GM12878 (cell line): ENCODE measurements at regions of chr22 and their contacts with region 1.

Region 1: DNA sequence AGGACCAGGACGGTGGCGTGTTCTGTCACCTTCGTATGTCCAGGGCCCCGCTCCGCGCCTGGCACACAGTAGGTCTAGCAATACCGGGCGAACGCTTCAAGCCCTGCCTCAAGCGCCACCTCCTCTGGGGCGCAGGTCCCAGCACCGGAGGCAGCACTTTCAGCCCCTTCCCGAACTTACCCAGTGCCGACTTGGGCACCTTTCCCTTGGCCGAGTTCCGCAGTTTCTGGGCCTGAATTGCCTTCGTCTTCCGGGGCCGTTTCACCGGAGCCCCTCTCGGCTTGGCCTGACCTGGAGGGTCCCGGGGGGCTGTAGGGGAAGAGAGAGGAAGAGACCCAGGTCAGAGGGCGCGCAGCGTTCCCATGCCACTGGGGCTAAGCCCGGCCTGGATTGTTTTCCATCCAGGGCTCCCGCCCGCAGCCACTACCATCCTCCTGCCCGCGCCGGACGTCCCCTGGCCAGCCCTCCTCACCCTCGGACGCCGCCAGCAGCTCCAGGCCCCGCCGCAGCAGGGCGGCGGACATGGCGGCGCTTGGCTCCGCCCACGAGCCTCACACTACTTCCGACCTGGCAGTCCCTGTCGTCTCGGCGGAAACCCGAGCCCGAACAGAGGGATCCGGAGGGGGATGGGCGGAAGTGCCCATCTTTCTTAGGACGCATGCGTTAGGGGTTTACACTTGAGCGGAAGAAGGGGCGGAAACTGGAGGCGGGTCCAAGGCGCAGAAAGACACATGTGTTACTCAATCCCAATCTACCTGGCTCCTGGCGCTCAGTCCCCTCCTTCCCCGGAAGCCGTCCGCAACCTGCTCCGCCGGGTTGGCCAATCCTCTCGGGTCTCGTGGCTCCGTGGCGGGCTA is at the start of gene RPS19BP1:
- DNase-seq: peak; percentile 100
- ATAC-seq: peak; percentile 80
- H3K4me3 ChIP-seq: peak within 1 kb of the TSS; percentile 99
- H3K27ac ChIP-seq: peak within 1 kb of the TSS; percentile 96
- H3K4me1 ChIP-seq: peaks cover 34% of the 10 kb centered on the region
- H3K27me3 ChIP-seq: no peaks in the 10 kb centered on the region
- CTCF ChIP-seq: no peak
- EP300 ChIP-seq: no peak
- POLR2A ChIP-seq: peak; percentile 99
- RAD21 ChIP-seq: no peak
- polyA plus RNA-seq, gene RPS19BP1: 2.7 to 14.3 TPM

Region 2: DNA sequence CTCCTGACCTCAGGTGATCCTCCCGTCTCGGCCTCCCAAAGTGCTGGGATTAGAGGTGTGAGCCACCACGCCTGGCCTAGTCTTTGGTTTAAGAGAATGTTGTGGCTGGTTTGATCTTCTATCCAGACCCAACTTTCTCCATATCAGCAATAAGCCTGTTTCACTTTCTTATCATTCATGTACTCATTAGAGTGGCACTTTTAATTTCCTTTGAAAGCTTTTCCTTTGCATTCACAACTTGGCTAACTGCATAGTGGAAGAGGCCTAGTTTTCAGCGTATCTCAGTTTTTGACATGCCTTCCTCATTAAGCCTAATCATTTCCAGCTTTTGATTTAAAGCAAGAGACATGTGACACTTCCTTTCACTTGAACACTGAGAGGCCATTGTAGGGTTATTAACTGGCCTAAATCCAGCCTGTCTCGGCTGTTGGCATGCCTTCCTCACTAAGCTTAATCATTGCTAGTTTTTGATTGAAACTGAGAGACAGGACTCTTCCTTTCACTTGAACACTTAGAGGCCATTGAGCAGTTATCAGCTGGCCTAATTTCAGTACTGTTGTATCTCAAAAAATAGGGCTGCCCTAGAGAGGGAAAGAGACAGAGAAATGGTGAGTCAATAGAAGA is 199.9 kb before region 1 on chr22:
- CTCF ChIA-PET with region 1: interaction called, 14 read pairs
- POLR2A ChIA-PET with region 1: no interaction called
- RAD21 ChIA-PET with region 1: interaction called, 6 read pairs
- SMC1A ChIA-PET with region 1: interaction called, 5 read pairs
- in situ Hi-C with region 1: no loop called
- intact Hi-C with region 1: no loop called
- DNase-seq: peak; percentile 36
- ATAC-seq: peak; percentile 93
- H3K4me3 ChIP-seq: no peak overlapping the region
- H3K27ac ChIP-seq: no peak overlapping the region
- H3K4me1 ChIP-seq: no peaks in the 10 kb centered on the region
- H3K27me3 ChIP-seq: no peaks in the 10 kb centered on the region
- CTCF ChIP-seq: no peak
- EP300 ChIP-seq: no peak
- POLR2A ChIP-seq: no peak
- RAD21 ChIP-seq: no peak

Region 3: DNA sequence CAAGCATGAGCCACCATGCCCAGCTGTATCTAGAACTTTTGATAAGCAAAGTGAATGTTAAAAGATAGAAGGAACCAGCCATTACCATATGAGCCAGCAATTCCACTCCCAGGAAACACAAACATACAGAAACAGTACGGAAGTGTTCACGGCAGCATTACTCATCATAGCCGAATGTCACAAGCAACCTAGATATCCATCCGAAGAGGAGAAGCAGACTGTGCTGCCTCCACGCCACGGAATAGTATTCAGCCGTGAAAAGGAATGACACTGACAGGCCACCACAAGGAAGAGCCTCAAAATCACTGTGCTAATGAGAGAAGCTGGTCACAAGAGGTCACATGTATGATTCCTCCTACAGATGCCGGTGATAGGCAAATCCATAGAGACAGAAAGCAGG is 93.3 kb before region 1 on chr22:
- CTCF ChIA-PET with region 1: interaction called, 10 read pairs
- POLR2A ChIA-PET with region 1: interaction called, 10 read pairs
- RAD21 ChIA-PET with region 1: interaction called, 22 read pairs
- SMC1A ChIA-PET with region 1: interaction called, 8 read pairs
- in situ Hi-C with region 1: no loop called
- intact Hi-C with region 1: no loop called
- DNase-seq: no peak
- ATAC-seq: no peak
- H3K4me3 ChIP-seq: no peak overlapping the region
- H3K27ac ChIP-seq: no peak overlapping the region
- H3K4me1 ChIP-seq: peaks cover 42% of the 10 kb centered on the region
- H3K27me3 ChIP-seq: no peaks in the 10 kb centered on the region
- CTCF ChIP-seq: no peak
- EP300 ChIP-seq: no peak
- POLR2A ChIP-seq: no peak
- RAD21 ChIP-seq: no peak

Region 4: DNA sequence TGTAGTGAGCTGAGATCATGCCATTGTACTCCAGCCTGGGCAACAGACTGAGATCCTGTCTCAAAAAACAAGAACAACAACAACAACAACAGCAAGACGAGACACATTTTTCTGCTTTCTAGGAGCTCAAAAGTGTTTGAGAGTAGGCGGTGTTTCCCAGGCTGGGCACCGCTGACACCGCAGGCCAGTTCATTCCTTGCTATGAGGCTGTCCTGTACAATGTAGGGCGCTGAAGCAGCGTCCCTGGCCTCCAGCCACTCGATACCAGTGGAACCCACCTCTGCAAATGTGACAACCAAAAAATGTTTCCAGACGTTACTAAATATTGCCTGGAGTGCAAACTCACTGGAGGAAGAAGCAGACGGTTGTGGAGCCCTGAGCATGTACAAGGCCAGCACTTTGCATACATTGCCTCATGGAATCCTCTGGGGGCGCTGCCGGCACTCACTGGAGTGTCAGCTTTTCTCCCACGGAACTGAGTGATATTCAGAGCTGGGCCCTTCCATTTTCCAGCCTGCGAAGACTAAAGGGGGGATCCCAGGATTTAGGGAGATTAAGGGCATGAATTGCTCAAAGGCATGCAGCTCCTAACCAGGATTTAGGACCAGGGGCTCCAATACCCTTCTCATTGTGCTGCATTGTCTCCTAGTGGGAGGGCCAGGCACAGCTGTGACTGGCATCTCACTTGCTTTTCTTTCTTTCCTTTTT is 36.2 kb before region 1 on chr22:
- CTCF ChIA-PET with region 1: interaction called, 372 read pairs
- POLR2A ChIA-PET with region 1: interaction called, 10 read pairs
- RAD21 ChIA-PET with region 1: interaction called, 30 read pairs
- SMC1A ChIA-PET with region 1: interaction called, 23 read pairs
- in situ Hi-C with region 1: no loop called
- intact Hi-C with region 1: loop called (anchors 1 kb)
- DNase-seq: no peak
- ATAC-seq: peak; percentile 93
- H3K4me3 ChIP-seq: no peak overlapping the region
- H3K27ac ChIP-seq: no peak overlapping the region
- H3K4me1 ChIP-seq: no peaks in the 10 kb centered on the region
- H3K27me3 ChIP-seq: no peaks in the 10 kb centered on the region
- CTCF ChIP-seq: peak; percentile 68 to 86 (median 82)
- EP300 ChIP-seq: no peak
- POLR2A ChIP-seq: no peak
- RAD21 ChIP-seq: peak; percentile 42

Region 5: GRCh38 chr22:39520054-39520891 is 12.2 kb before region 1 on chr22 and contains the start of gene ATF4:
- CTCF ChIA-PET with region 1: interaction called, 75 read pairs
- POLR2A ChIA-PET with region 1: interaction called, 32 read pairs
- RAD21 ChIA-PET with region 1: interaction called, 44 read pairs
- SMC1A ChIA-PET with region 1: interaction called, 30 read pairs
- in situ Hi-C with region 1: no loop called
- intact Hi-C with region 1: no loop called
- DNase-seq: peak; percentile 93
- ATAC-seq: peak; percentile 91
- H3K4me3 ChIP-seq: peak within 1 kb of the TSS; percentile 97
- H3K27ac ChIP-seq: peak within 1 kb of the TSS; percentile 96
- H3K4me1 ChIP-seq: peaks cover 23% of the 10 kb centered on the region
- H3K27me3 ChIP-seq: no peaks in the 10 kb centered on the region
- CTCF ChIP-seq: no peak
- EP300 ChIP-seq: no peak
- POLR2A ChIP-seq: peak; percentile 93
- RAD21 ChIP-seq: no peak
- polyA plus RNA-seq, gene ATF4: 88.3 to 187 TPM

Region 6: GRCh38 chr22:40346178-40347118 is 814.0 kb after region 1 on chr22 and contains the start of gene ADSL:
- CTCF ChIA-PET with region 1: interaction called, 8 read pairs
- POLR2A ChIA-PET with region 1: no interaction called
- RAD21 ChIA-PET with region 1: no interaction called
- SMC1A ChIA-PET with region 1: interaction called, 6 read pairs
- in situ Hi-C with region 1: loop called (anchors 5 kb)
- intact Hi-C with region 1: loop called (anchors 5 kb)
- DNase-seq: peak; percentile 41
- ATAC-seq: peak; percentile 95
- H3K4me3 ChIP-seq: peak within 1 kb of the TSS; percentile 81
- H3K27ac ChIP-seq: peak within 1 kb of the TSS; percentile 92
- H3K4me1 ChIP-seq: 0 out of 2 replicates have a peak, but pooled peaks cover 3% of the 10 kb centered on the region
- H3K27me3 ChIP-seq: no peaks in the 10 kb centered on the region
- CTCF ChIP-seq: no peak
- EP300 ChIP-seq: no peak
- POLR2A ChIP-seq: peak; percentile 99
- RAD21 ChIP-seq: no peak
- polyA plus RNA-seq, gene ADSL: 230 to 313 TPM